ENCODE measurements at regions of chr6 and their contacts with region 1.

Region 1: GRCh38 chr6:82144007-82144851 is 103.3 kb downstream of the IBTK start:
- DNase-seq: peak; percentile 26
- ATAC-seq: peak; percentile 89
- H3K4me3 ChIP-seq: no peak overlapping the region
- H3K27ac ChIP-seq: no peak overlapping the region
- H3K4me1 ChIP-seq: peaks cover 4% of the 10 kb centered on the region
- H3K27me3 ChIP-seq: no peaks in the 10 kb centered on the region
- CTCF ChIP-seq: no peak
- EP300 ChIP-seq: no peak
- POLR2A ChIP-seq: no peak
- RAD21 ChIP-seq: no peak

Region 2: DNA sequence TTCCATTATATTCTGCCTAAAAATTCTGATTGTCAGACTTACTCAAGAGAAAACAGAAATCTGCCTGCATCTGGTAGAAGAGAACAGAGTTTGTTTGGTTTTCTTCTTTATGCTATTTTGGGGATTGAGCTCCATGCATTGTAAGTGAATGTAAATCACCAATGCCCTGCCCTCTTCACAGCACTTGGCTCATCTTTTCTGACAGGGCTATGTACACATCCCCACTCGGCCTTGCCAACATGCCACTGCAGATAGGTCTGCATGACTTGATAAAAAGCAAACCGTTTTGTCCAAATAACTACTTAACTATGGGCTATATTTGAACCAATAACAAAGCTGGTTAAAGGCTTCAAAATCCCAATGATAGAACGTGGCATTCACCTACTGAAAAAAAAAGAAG is 14.4 kb before region 1 on chr6:
- CTCF ChIA-PET with region 1: no interaction called
- POLR2A ChIA-PET with region 1: no interaction called
- RAD21 ChIA-PET with region 1: no interaction called
- SMC1A ChIA-PET with region 1: interaction called, 12 read pairs
- in situ Hi-C with region 1: no loop called
- intact Hi-C with region 1: no loop called
- DNase-seq: no peak
- ATAC-seq: no peak
- H3K4me3 ChIP-seq: no peak overlapping the region
- H3K27ac ChIP-seq: no peak overlapping the region
- H3K4me1 ChIP-seq: no peaks in the 10 kb centered on the region
- H3K27me3 ChIP-seq: no peaks in the 10 kb centered on the region
- CTCF ChIP-seq: no peak
- EP300 ChIP-seq: no peak
- POLR2A ChIP-seq: no peak
- RAD21 ChIP-seq: no peak

Measured in GM12878 (cell line).